Esophagus muscularis mucosa (tissue), 4 donors: ENCODE measurements at regions of chr6 and their contacts with region 1.

Region 1: DNA sequence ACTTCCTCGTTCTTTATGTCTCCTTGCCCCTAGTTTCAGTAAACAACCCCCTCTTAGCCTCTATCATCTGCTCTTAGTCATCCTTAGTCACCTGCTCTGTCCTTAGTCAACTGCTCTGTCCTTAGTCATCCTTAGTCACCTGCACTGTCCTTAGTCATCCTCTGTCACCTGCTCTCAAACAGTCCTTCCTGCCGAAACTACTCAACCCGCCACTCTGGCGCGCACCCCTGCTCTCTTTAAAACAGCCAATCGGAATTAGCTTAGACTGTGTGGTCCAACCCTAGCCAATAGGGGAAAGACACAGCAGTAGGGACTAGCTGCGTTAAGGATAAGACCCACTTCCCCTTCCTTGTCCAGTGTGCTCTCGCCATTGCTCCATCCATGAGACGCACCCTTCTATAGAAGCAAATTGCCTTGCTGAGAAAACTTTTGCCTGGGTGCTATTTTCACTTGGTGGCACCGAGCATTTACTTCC is 73.9 kb downstream of the BACH2 start:
- DNase-seq: no peak
- H3K4me3 ChIP-seq: no peak overlapping the region
- H3K27ac ChIP-seq: no peak overlapping the region
- H3K4me1 ChIP-seq: peaks cover 24 to 37% (median 29%) of the 10 kb centered on the region in 4 donors
- H3K27me3 ChIP-seq: no peaks in the 10 kb centered on the region
- CTCF ChIP-seq: no peak
- EP300 ChIP-seq: no peak
- POLR2A ChIP-seq: no peak

Region 2: GRCh38 chr6:90369024-90369519 is 146.3 kb after region 1 on chr6:
- intact Hi-C with region 1: loop called (anchors 10 kb)
- DNase-seq: no peak
- H3K4me3 ChIP-seq: no peak overlapping the region
- H3K27ac ChIP-seq: peak overlapping the region; percentile 79 to 84 (median 80)
- H3K4me1 ChIP-seq: peaks cover 6 to 21% (median 19%) of the 10 kb centered on the region in 4 donors
- H3K27me3 ChIP-seq: no peaks in the 10 kb centered on the region
- CTCF ChIP-seq: no peak
- EP300 ChIP-seq: peak; percentile 54
- POLR2A ChIP-seq: no peak